ENCODE measurements at regions of chrX and their contacts with region 1.

Region 1: DNA sequence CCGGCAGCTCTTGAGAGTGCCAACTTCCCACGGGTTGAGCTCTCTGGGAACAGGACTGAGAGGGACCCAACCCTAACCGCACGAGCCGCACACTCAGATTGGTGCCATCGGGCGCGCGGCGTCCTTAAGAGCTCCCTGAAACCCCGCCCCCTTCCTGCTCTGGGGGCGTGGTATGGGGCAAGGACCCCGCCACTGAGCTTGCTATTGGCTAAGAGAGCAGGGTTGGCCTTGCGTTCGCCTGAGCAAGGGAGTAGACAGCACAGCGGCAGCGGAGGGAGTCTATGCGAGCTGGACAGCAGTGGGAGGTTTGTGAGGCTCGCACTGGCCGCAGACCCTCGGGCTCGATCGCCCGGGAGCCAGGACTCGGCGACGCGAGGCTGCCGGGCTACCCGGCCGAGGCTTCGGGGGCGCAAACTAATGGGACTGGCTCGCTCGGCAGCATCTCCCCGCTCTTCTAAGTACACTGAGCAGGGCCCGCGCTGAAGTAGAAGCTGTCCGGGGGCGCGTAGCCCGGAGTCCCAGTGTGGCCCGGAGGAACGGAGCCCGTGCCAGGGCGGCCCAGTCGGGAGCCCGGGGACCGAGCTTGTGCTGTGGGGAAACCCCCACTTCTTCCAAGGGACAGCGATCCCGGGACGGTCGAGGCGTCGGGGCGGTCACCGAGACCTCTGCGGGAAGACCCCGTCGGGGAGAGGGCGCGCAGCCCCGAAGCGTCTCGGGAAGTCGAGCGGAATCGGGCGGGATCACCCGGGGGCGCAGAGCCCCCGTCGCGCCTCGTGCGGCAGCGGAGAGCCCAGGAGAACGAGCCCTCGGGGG is at the start of gene EFNB1:
- DNase-seq: peak; percentile 42
- ATAC-seq: peak; percentile 94
- H3K4me3 ChIP-seq: peak within 1 kb of the TSS; percentile 57
- H3K27ac ChIP-seq: no peak within 1 kb of the TSS
- H3K4me1 ChIP-seq: no peaks in the 10 kb centered on the region
- H3K27me3 ChIP-seq: peaks cover 0 to 1% of the 10 kb centered on the region in 2 experiments; a peak in 2 of 4 replicates
- CTCF ChIP-seq: no peak
- EP300 ChIP-seq: no peak
- POLR2A ChIP-seq: peak; percentile 68
- RAD21 ChIP-seq: no peak
- polyA plus RNA-seq, gene EFNB1: 0.02 TPM in 1 of 2 experiments, not detected in the other

Region 2: DNA sequence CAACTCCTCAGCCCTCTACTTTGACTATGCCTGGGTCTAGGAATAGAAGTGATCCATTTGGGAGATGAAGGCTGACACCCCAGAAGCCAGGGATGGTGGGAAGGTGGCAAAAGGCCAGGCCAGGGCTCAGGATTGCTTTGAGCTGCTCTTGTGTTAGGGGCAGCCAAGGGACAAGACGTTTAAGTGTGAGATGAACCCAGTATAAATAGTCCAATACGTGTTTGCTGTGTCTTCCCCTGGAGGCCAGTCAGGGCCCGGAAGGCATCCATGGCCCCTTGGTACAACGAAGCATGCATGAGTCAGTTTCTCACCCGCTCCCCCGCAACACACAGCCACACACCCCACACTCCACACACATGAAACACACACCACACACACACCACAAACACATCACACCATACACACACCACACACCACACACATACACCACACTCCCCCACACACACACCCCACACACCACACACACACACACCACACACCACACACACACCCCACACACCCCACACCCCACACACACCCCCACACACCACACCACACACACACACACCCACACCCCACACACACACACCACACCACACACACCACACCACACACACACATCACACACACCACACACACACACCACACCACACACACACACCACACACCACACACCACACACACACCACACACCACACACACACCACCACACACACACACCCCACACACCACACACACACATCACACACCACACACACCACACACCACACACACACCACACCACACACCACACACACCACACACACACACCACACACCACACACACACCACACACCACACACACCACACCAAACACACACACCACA is 176.4 kb before region 1 on chrX:
- CTCF ChIA-PET with region 1: no interaction called
- POLR2A ChIA-PET with region 1: no interaction called
- RAD21 ChIA-PET with region 1: no interaction called
- SMC1A ChIA-PET with region 1: no interaction called
- in situ Hi-C with region 1: no loop called
- intact Hi-C with region 1: no loop called
- DNase-seq: no peak
- ATAC-seq: no peak
- H3K4me3 ChIP-seq: no peak overlapping the region
- H3K27ac ChIP-seq: no peak overlapping the region
- H3K4me1 ChIP-seq: no peaks in the 10 kb centered on the region
- H3K27me3 ChIP-seq: no peaks in the 10 kb centered on the region; a peak in 1 of 4 replicates
- CTCF ChIP-seq: no peak
- EP300 ChIP-seq: no peak
- POLR2A ChIP-seq: no peak
- RAD21 ChIP-seq: no peak

Region 3: GRCh38 chrX:69060631-69061408 is 231.9 kb after region 1 on chrX:
- CTCF ChIA-PET with region 1: interaction called, 16 read pairs
- POLR2A ChIA-PET with region 1: no interaction called
- RAD21 ChIA-PET with region 1: interaction called, 13 read pairs
- SMC1A ChIA-PET with region 1: no interaction called
- in situ Hi-C with region 1: no loop called
- intact Hi-C with region 1: loop called (anchors 1 kb)
- DNase-seq: no peak
- ATAC-seq: no peak; the same call in 2 of the 3 replicates
- H3K4me3 ChIP-seq: no peak overlapping the region
- H3K27ac ChIP-seq: no peak overlapping the region
- H3K4me1 ChIP-seq: no peaks in the 10 kb centered on the region
- H3K27me3 ChIP-seq: peaks cover 0 to 2% of the 10 kb centered on the region in 2 experiments; a peak in 1 of 4 replicates
- CTCF ChIP-seq: peak in 2 of 3 experiments; percentile 3 to 28; a peak in 2 of 6 replicates
- EP300 ChIP-seq: no peak
- POLR2A ChIP-seq: no peak
- RAD21 ChIP-seq: peak; percentile 65

Region 4: GRCh38 chrX:69158166-69158980 is 329.4 kb after region 1 on chrX:
- CTCF ChIA-PET with region 1: interaction called, 4 read pairs
- POLR2A ChIA-PET with region 1: no interaction called
- RAD21 ChIA-PET with region 1: no interaction called
- SMC1A ChIA-PET with region 1: interaction called, 3 read pairs
- in situ Hi-C with region 1: no loop called
- intact Hi-C with region 1: loop called (anchors 10 kb)
- DNase-seq: no peak
- ATAC-seq: peak; percentile 98
- H3K4me3 ChIP-seq: no peak overlapping the region
- H3K27ac ChIP-seq: no peak overlapping the region
- H3K4me1 ChIP-seq: no peaks in the 10 kb centered on the region; the same call in 1 of the 2 replicates
- H3K27me3 ChIP-seq: no peaks in the 10 kb centered on the region
- CTCF ChIP-seq: peak; percentile 45 to 64 (median 54)
- EP300 ChIP-seq: no peak
- POLR2A ChIP-seq: no peak
- RAD21 ChIP-seq: peak; percentile 45

Region 5: GRCh38 chrX:69222103-69223090 is 393.5 kb after region 1 on chrX:
- CTCF ChIA-PET with region 1: interaction called, 34 read pairs
- POLR2A ChIA-PET with region 1: no interaction called
- RAD21 ChIA-PET with region 1: interaction called, 21 read pairs
- SMC1A ChIA-PET with region 1: interaction called, 10 read pairs
- in situ Hi-C with region 1: loop called (anchors 5 kb)
- intact Hi-C with region 1: loop called (anchors 1 kb)
- DNase-seq: no peak
- ATAC-seq: peak; percentile 95
- H3K4me3 ChIP-seq: no peak overlapping the region
- H3K27ac ChIP-seq: no peak overlapping the region
- H3K4me1 ChIP-seq: no peaks in the 10 kb centered on the region
- H3K27me3 ChIP-seq: no peaks in the 10 kb centered on the region; a peak in 2 of 4 replicates
- CTCF ChIP-seq: peak; percentile 64 to 73 (median 71)
- EP300 ChIP-seq: no peak
- POLR2A ChIP-seq: no peak
- RAD21 ChIP-seq: peak; percentile 83

Region 6: DNA sequence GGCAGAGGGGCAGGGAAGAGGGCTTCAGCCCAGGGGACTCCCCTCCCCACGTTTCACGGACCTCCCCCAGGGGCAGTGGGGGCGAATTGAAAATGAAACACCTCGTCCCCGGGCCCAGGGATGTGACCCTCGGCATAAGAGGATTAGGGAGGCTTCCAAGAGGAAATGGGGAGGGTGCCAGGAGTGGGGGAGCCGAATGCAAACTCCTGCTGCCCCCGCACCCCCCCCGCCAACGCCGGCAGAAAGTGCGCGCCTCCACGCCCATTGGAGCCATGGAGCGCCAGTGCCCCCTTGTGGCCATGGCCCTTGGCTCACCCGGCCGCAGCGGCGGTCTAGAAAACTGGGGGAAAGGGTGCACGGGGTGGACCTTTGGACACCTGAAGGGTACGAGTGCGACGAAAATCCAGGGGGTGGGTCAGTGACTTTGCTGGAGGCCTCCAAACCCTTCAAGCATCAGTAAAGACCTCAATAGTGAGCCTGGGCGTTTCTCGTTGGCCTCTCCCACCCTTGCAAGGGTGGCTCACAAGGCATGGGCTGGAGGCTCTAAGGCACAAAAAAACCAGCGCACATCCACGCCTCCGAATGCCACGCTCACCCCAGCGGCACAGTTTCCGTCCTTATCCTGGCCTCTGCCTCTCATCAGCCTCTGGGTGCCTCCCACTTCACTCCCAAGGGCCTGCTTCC is 457.1 kb after region 1 on chrX:
- CTCF ChIA-PET with region 1: interaction called, 12 read pairs
- POLR2A ChIA-PET with region 1: no interaction called
- RAD21 ChIA-PET with region 1: interaction called, 10 read pairs
- SMC1A ChIA-PET with region 1: interaction called, 4 read pairs
- in situ Hi-C with region 1: loop called (anchors 5 kb)
- intact Hi-C with region 1: loop called (anchors 1 kb)
- DNase-seq: no peak
- ATAC-seq: peak; percentile 95
- H3K4me3 ChIP-seq: no peak overlapping the region
- H3K27ac ChIP-seq: no peak overlapping the region
- H3K4me1 ChIP-seq: no peaks in the 10 kb centered on the region
- H3K27me3 ChIP-seq: no peaks in the 10 kb centered on the region
- CTCF ChIP-seq: peak; percentile 82 to 98 (median 84)
- EP300 ChIP-seq: no peak
- POLR2A ChIP-seq: no peak
- RAD21 ChIP-seq: peak; percentile 84

Region 7: GRCh38 chrX:69988955-69989394 is 1160.0 kb after region 1 on chrX:
- CTCF ChIA-PET with region 1: no interaction called
- POLR2A ChIA-PET with region 1: no interaction called
- RAD21 ChIA-PET with region 1: no interaction called
- SMC1A ChIA-PET with region 1: no interaction called
- in situ Hi-C with region 1: no loop called
- intact Hi-C with region 1: no loop called
- DNase-seq: no peak
- ATAC-seq: no peak
- H3K4me3 ChIP-seq: no peak overlapping the region
- H3K27ac ChIP-seq: no peak overlapping the region
- H3K4me1 ChIP-seq: no peaks in the 10 kb centered on the region
- H3K27me3 ChIP-seq: no peaks in the 10 kb centered on the region
- CTCF ChIP-seq: no peak
- EP300 ChIP-seq: no peak
- POLR2A ChIP-seq: no peak
- RAD21 ChIP-seq: no peak